ENCODE measurements at regions of chr17 and their contacts with region 1.

Region 1: DNA sequence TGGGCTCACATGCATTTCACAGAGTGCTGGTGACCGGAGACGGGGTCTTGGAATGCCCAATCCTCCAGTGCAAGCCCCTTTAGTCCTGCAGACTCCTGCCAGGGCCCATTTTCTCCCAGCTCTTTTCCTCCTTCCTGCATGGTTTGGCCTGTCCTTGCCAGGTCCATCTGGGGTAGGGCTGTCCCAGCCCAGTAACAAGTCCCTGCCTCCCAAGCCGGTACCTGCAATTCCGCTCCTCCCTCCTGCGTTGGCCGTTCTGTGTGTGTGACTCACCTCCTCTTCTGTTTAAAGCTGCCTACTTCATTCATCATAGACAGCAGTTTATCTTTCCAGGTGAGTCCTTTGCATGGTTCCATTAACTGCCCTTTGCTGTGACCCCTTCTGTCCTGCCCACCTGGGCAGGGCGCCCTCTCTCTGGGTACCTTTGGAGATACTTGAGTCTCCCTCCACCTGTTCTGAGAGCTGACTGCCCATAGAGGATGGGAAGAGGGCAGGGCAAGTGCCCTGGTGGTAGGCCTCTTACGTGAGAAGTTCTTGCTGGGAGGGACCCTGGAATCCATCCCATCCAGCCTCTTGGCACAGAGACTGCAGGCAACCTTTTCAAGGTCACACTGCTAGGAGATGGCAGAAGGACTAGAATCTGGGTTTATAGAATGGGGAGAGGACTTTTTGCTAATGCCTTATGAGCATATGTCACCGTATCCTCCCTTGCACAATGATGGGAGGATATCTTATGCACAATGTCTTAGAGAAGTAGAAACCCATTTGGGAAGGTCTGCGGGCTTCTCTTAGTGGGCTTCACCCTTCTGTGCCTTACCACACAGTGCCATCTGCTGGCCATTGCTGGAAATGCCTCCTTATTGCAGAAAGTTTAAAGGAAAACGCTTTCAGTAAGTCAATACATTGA is 29.7 kb upstream of the LGALS9 start:
- DNase-seq: peak; percentile 20
- H3K4me3 ChIP-seq: no peak overlapping the region
- H3K27ac ChIP-seq: peak overlapping the region in 3 of 4 donors; percentile 3 to 64 (median 48)
- H3K4me1 ChIP-seq: peaks cover 4 to 36% (median 6%) of the 10 kb centered on the region in 3 donors
- H3K27me3 ChIP-seq: no peaks in the 10 kb centered on the region
- CTCF ChIP-seq: peak; percentile 89 to 96 (median 92)
- POLR2A ChIP-seq: no peak

Region 2: DNA sequence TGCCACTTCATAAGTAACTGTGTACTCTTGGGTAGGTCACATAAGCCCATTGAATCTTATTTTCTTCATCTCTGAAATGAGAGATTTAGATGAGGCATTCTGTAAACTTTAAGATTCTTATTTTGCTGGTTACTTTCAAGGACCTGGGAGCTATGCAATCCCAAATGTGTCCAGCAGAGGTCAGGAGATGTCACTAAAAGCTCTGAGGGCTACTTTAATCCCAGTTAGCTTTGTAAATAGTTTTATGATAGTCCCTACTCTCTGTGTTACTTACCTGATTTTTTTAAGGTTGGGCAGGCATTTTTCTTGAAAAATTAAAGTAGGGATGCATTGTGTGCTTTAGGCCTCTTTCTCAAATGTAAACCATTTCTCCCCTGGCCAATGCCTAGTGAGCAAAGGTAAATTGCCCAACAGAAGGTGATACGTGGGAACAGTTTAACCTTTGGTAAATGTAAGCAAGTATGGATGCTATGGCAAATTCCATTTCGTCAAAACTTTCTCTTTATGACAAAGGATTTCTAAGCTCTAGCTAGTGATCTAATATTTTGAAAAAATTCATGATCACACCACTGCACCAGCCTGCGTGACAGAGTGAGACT is 364.5 kb before region 1 on chr17:
- intact Hi-C with region 1: loop called (anchors 5 kb)
- DNase-seq: no peak
- H3K4me3 ChIP-seq: no peak overlapping the region
- H3K27ac ChIP-seq: no peak overlapping the region
- H3K4me1 ChIP-seq: peaks cover 3 to 44% (median 19%) of the 10 kb centered on the region in 3 donors
- H3K27me3 ChIP-seq: no peaks in the 10 kb centered on the region
- CTCF ChIP-seq: peak; percentile 81 to 97 (median 93)
- POLR2A ChIP-seq: no peak

Region 3: GRCh38 chr17:27353461-27354050 is 247.8 kb before region 1 on chr17:
- intact Hi-C with region 1: loop called (anchors 5 kb)
- DNase-seq: peak; percentile 50
- H3K4me3 ChIP-seq: peak overlapping the region; percentile 41 to 72 (median 63)
- H3K27ac ChIP-seq: peak overlapping the region; percentile 86 to 97 (median 92)
- H3K4me1 ChIP-seq: peaks cover 14 to 48% (median 26%) of the 10 kb centered on the region in 3 donors
- H3K27me3 ChIP-seq: no peaks in the 10 kb centered on the region
- CTCF ChIP-seq: peak; percentile 78 to 100 (median 100)
- POLR2A ChIP-seq: peak in 3 of 4 donors; percentile 88 to 93 (median 93)

Region 4: GRCh38 chr17:27455914-27456680 is 145.2 kb before region 1 on chr17 and contains the start of gene KSR1:
- intact Hi-C with region 1: loop called (anchors 10 kb)
- DNase-seq: peak; percentile 40
- H3K4me3 ChIP-seq: peak within 1 kb of the TSS; percentile 68 to 91 (median 86)
- H3K27ac ChIP-seq: peak within 1 kb of the TSS; percentile 72 to 89 (median 84)
- H3K4me1 ChIP-seq: peaks cover 18 to 51% (median 24%) of the 10 kb centered on the region in 3 donors
- H3K27me3 ChIP-seq: no peaks in the 10 kb centered on the region
- CTCF ChIP-seq: peak in 3 of 6 experiments; percentile 18 to 35 (median 27)
- POLR2A ChIP-seq: peak in 2 of 4 donors; percentile 78 to 91
- total RNA-seq, gene KSR1: 22.3 to 32.4 (median 31.0) TPM

Region 5: GRCh38 chr17:27654654-27655524 is 53.6 kb after region 1 on chr17:
- intact Hi-C with region 1: loop called (anchors 2 kb)
- DNase-seq: no peak
- H3K4me3 ChIP-seq: no peak overlapping the region
- H3K27ac ChIP-seq: no peak overlapping the region
- H3K4me1 ChIP-seq: no peaks in the 10 kb centered on the region
- H3K27me3 ChIP-seq: peaks cover 0 to 11% (median 0%) of the 10 kb centered on the region in 4 donors
- CTCF ChIP-seq: peak; percentile 84 to 97 (median 90)
- POLR2A ChIP-seq: no peak